IMR-90 (cell line): ENCODE measurements at regions of chr12 and their contacts with region 1.

Region 1: DNA sequence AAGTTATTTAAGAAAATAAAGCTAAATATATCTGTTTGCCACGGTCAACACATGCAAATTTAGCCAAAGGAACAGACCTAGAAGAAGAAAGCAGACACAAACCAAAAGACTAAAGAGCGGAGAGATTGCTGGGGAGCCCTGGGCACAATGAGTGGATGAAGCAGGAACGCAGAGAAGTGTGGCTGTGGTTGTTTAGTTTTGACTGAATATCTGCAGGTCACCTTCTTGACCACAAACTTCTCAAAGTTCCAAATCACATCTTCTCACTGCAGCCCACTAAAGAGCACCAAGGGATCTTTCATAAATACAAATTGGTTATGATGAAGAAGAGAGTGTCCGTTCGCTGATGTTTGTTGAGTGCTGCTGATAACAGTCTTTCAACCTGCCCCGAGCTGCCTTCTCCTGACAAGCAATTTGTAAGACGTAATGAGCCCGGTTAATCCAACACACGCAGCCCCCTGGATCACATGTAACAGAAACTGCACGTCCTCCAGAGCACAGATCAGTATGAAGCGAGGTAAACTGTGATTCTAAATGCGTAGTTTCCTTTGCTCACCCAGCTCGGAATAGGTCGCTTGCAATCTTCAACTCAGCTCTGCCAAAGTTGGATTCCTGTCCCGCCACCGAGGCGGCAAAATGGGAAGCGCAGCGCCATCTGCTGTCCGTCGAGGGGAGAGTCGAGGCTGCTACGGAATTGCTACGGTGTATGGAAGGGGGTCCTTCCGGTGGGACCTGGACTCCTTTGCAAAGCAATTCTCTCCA is 120.8 kb downstream of the GXYLT1 start:
- DNase-seq: peak; percentile 64
- ATAC-seq: peak; percentile 99
- H3K4me3 ChIP-seq: peak overlapping the region; percentile 49
- H3K27ac ChIP-seq: no peak overlapping the region
- H3K4me1 ChIP-seq: no peaks in the 10 kb centered on the region
- H3K27me3 ChIP-seq: peaks cover 2% of the 10 kb centered on the region; the same call in 1 of the 2 replicates
- CTCF ChIP-seq: peak; percentile 87
- POLR2A ChIP-seq: no peak
- RAD21 ChIP-seq: peak; percentile 76

Region 2: DNA sequence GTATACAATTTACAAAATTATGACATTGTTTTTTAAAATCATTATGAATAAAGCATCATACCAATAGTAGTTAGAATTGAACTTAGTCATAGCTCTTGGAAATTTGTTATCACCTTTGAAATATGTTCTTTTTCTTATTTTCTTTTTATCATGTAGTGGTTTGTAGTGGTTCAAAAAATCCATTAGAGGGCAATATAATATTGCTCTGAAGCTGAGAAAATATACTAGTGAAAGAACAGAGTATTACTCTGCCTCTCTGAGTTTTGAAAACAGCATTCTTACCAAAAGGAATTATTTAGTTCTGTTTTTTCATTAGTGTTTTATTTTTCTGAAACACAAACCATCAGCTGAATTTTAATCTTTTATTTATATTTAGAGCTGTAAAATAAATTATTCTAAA is 759.6 kb before region 1 on chr12:
- CTCF ChIA-PET with region 1: interaction called, 11 read pairs
- POLR2A ChIA-PET with region 1: no interaction called
- dilution Hi-C with region 1: no loop called
- in situ Hi-C with region 1: no loop called
- intact Hi-C with region 1: no loop called
- DNase-seq: no peak
- ATAC-seq: peak; percentile 53; the same call in 1 of the 2 replicates
- H3K4me3 ChIP-seq: no peak overlapping the region
- H3K27ac ChIP-seq: no peak overlapping the region
- H3K4me1 ChIP-seq: no peaks in the 10 kb centered on the region
- H3K27me3 ChIP-seq: no peaks in the 10 kb centered on the region; the same call in 1 of the 2 replicates
- CTCF ChIP-seq: peak; percentile 45
- POLR2A ChIP-seq: no peak
- RAD21 ChIP-seq: peak; percentile 36; the same call in 1 of the 2 replicates

Region 3: DNA sequence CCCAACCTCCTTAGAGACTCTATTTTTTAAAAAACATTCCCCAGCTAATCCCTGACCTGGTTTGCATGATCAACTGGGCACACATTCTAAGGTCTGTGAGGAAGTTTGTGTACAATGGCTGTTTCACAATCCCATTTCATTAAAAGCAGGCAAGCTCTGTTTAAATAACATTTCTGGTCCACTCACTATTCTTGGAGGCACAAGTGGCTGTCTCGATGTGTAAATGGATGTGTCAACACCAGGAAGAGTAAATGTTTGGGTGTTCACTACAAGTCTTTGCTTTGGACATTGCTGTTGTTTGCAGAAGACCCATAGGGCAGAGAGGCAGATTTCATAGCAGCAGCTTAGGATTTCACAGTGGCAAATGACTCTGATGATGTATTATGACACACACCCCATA is 737.5 kb before region 1 on chr12:
- CTCF ChIA-PET with region 1: no interaction called
- POLR2A ChIA-PET with region 1: no interaction called
- dilution Hi-C with region 1: no loop called
- in situ Hi-C with region 1: loop called (anchors 10 kb)
- intact Hi-C with region 1: no loop called
- DNase-seq: no peak
- ATAC-seq: no peak
- H3K4me3 ChIP-seq: no peak overlapping the region
- H3K27ac ChIP-seq: no peak overlapping the region
- H3K4me1 ChIP-seq: no peaks in the 10 kb centered on the region
- H3K27me3 ChIP-seq: no peaks in the 10 kb centered on the region
- CTCF ChIP-seq: no peak
- POLR2A ChIP-seq: no peak
- RAD21 ChIP-seq: no peak

Region 4: DNA sequence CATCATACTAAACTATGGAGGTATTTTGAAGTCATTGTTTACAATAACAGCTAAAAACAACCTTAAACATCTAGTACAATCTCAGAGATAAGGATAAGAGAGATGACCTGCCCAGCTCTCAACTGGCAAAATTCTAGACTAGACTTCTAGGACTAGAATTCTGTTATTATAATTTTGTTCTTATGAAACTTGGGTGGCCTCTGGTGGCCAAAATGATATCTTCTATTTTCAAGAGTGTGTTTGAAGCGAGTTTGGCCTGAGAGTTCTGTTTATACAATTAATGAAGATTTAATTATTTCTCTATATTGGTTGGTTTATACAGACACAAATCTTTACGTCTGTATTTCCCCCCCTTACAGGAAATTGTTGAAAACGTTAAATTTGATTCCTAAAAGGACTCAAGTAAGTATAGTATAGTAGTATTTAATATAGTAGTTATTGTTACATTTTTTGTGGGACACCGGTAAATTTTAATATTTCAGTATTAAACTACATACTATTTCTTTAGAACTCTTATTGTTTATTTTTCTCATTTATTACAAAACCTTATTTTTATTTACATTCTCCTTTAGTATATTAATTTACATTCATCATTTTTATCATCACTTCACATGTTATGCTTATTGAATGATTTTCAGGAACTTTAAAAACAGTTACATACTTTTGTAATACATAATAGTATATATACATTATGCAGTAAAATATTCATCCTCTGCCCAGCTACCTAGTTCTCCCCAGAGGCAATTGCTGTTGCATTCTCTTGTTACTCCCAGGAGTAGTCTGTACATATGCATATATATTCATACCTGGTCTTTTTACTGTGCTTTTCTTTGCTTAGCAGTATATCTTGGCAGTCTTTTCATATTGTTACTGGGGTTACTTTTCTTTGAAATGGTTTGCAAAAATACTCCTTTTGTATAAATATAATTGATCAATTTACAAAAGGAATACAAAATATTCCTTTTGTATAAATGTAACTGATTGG is 308.7 kb after region 1 on chr12:
- CTCF ChIA-PET with region 1: no interaction called
- POLR2A ChIA-PET with region 1: no interaction called
- dilution Hi-C with region 1: no loop called
- in situ Hi-C with region 1: no loop called
- intact Hi-C with region 1: loop called (anchors 2 kb)
- DNase-seq: peak; percentile 51
- ATAC-seq: peak; percentile 85
- H3K4me3 ChIP-seq: no peak overlapping the region
- H3K27ac ChIP-seq: no peak overlapping the region
- H3K4me1 ChIP-seq: 0 out of 2 replicates have a peak, but pooled peaks cover 1% of the 10 kb centered on the region
- H3K27me3 ChIP-seq: no peaks in the 10 kb centered on the region
- CTCF ChIP-seq: peak; percentile 63
- POLR2A ChIP-seq: no peak
- RAD21 ChIP-seq: peak; percentile 66

Region 5: GRCh38 chr12:43087195-43088091 is 1063.5 kb after region 1 on chr12:
- CTCF ChIA-PET with region 1: no interaction called
- POLR2A ChIA-PET with region 1: no interaction called
- dilution Hi-C with region 1: no loop called
- in situ Hi-C with region 1: no loop called
- intact Hi-C with region 1: no loop called
- DNase-seq: no peak
- ATAC-seq: no peak
- H3K4me3 ChIP-seq: no peak overlapping the region
- H3K27ac ChIP-seq: no peak overlapping the region
- H3K4me1 ChIP-seq: no peaks in the 10 kb centered on the region
- H3K27me3 ChIP-seq: no peaks in the 10 kb centered on the region
- CTCF ChIP-seq: no peak
- POLR2A ChIP-seq: no peak
- RAD21 ChIP-seq: no peak